ENCODE measurements at regions of chr3 and their contacts with region 1.

Region 1: DNA sequence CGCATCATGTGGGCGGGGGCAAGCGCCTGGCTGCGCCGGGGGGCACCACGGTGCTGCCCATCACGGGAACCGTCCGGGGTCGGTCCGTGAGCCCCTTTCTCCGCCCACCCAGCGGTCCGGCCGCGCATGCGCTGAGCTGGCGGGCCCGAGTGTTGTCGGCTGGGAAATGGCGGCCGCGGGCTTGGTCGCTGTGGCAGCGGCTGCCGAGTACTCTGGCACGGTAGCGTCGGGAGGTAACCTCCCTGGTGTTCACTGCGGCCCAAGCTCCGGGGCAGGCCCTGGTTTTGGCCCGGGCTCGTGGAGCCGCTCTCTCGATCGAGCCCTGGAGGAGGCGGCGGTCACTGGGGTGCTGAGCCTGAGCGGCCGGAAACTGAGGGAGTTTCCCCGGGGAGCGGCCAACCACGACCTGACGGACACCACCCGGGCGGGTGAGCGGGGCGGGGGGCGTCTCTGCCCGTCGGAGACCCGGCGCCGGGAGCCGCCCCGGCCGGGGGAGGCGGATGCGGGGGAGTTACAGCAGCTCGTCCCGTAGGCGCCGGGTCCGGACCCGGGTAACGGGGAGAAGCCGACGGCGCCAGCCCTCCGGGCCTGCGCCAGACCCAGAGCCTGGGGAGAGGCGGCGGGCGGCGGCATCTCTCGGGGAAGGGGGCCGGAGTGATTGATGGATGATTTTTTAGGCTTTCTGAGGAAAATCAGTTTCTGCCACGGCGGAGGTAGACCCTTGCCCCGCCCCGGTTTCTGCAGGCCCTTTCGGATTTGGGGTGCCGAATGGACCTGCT is at the start of gene LRCH3:
- DNase-seq: peak; percentile 91
- ATAC-seq: peak; percentile 75
- H3K4me3 ChIP-seq: peak within 1 kb of the TSS; percentile 73 to 98 (median 95)
- H3K4me3 Mint-ChIP-seq: peak within 1 kb of the TSS; percentile 96
- H3K27ac ChIP-seq: peak within 1 kb of the TSS; percentile 96 to 99
- H3K27ac Mint-ChIP-seq: peak within 1 kb of the TSS; percentile 97
- H3K4me1 ChIP-seq: peaks cover 33 to 36% of the 10 kb centered on the region in 2 donors
- H3K4me1 Mint-ChIP-seq: peaks cover 54% of the 10 kb centered on the region
- H3K27me3 ChIP-seq: no peaks in the 10 kb centered on the region
- H3K27me3 Mint-ChIP-seq: no peaks in the 10 kb centered on the region
- CTCF ChIP-seq: no peak
- total RNA-seq, gene LRCH3: 136 and 145 TPM in 2 replicates

Region 2: DNA sequence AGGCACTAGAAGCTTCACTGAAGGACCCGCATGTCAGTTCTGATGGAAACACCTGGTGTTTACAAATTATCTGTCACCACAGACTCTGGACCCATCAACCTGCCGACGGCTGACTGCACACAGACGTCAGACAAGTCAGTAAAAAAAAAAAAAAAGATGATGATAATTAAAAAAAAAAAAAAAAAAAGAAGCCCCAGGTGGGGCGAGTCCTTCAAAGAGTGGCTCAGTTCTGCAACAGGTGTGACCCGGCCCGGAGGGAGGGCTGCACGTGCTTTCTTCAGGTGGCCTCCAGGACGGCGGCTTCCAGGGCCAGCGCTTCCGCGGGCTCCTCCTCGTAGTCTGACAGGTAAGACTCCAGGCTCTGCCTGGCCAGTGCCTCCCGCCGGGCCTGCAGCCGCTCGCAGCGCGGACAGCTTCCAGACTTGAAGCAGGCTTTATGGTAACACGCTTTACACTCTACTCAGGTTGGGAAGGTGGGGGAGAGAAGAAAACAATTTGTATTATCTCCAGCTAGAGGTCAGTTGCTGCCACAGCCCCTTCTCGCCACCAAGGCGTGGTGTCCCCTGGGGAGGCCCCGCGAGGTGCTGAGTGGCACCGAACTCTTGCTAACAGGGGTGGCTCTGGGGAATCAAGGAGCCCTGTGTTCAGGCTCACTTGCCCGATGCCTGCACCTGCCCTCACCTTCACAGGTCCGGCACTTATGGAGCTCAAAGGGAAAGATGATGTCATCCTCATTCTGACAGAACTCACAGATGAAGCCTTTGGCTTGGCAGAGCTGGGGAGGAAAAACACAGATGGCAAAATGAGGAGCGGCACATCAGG is 116.3 kb before region 1 on chr3:
- CTCF ChIA-PET with region 1: no interaction called
- POLR2A ChIA-PET with region 1: interaction called, 7 read pairs
- intact Hi-C with region 1: loop called (anchors 5 kb)
- DNase-seq: peak; percentile 80
- ATAC-seq: peak; percentile 91
- H3K4me3 ChIP-seq: no peak overlapping the region
- H3K4me3 Mint-ChIP-seq: peak overlapping the region; percentile 89
- H3K27ac ChIP-seq: peak overlapping the region; percentile 73
- H3K27ac Mint-ChIP-seq: peak overlapping the region; percentile 96
- H3K4me1 ChIP-seq: peaks cover 3 to 21% of the 10 kb centered on the region in 2 donors
- H3K4me1 Mint-ChIP-seq: peaks cover 47% of the 10 kb centered on the region
- H3K27me3 ChIP-seq: no peaks in the 10 kb centered on the region
- H3K27me3 Mint-ChIP-seq: no peaks in the 10 kb centered on the region
- CTCF ChIP-seq: no peak

Region 3: DNA sequence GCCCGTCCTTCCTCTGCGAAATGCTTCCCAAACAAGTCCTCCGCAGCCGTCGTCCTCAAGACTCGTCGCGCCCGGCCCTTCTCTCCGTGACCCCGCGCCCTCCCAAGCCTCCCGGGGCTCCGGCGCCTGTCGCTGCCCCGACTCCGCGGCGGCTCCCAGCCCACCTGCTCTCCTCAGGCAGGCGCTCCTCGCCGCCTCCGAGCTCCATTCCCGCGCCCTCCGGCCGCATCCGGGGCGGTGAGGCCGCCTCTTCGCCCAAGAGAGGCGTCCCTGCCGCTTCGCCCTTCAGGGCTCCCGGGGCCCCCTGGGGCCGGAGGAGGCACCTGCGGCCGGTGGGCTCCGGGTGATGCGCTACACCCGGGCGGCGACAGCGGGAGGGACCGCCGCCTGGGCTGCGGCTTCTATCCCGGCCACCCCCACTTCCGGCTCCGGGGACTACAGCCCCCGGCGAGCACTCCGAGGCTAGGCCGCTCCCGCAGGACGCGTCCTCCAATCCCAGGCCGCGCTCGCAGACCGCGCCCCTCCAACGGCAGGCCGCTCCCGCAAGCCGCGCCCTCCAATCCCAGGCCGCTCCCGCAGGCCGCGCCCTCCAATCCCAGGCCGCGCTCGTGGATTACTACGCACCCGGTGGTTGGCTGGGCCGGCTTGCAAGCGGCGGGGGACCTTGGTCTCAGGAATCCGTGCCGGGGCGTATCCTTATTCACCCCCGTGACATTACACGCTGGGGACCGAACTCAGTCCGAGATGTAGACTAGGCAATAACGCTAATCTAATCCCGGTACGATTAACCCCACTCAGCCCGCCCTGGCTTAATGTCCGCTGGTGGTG is 54.6 kb before region 1 on chr3 and contains the start of gene RUBCN:
- CTCF ChIA-PET with region 1: no interaction called
- POLR2A ChIA-PET with region 1: interaction called, 3 read pairs
- intact Hi-C with region 1: loop called (anchors 1 kb)
- DNase-seq: peak; percentile 95
- ATAC-seq: peak; percentile 86
- H3K4me3 ChIP-seq: peak within 1 kb of the TSS; percentile 61 to 93 (median 87)
- H3K4me3 Mint-ChIP-seq: peak within 1 kb of the TSS; percentile 100
- H3K27ac ChIP-seq: peak within 1 kb of the TSS; percentile 89 to 95
- H3K27ac Mint-ChIP-seq: peak within 1 kb of the TSS; percentile 99
- H3K4me1 ChIP-seq: peaks cover 47 to 51% of the 10 kb centered on the region in 2 donors
- H3K4me1 Mint-ChIP-seq: peaks cover 50% of the 10 kb centered on the region
- H3K27me3 ChIP-seq: no peaks in the 10 kb centered on the region
- H3K27me3 Mint-ChIP-seq: no peaks in the 10 kb centered on the region
- CTCF ChIP-seq: no peak
- total RNA-seq, gene RUBCN: 423 and 427 TPM in 2 replicates

Region 4: DNA sequence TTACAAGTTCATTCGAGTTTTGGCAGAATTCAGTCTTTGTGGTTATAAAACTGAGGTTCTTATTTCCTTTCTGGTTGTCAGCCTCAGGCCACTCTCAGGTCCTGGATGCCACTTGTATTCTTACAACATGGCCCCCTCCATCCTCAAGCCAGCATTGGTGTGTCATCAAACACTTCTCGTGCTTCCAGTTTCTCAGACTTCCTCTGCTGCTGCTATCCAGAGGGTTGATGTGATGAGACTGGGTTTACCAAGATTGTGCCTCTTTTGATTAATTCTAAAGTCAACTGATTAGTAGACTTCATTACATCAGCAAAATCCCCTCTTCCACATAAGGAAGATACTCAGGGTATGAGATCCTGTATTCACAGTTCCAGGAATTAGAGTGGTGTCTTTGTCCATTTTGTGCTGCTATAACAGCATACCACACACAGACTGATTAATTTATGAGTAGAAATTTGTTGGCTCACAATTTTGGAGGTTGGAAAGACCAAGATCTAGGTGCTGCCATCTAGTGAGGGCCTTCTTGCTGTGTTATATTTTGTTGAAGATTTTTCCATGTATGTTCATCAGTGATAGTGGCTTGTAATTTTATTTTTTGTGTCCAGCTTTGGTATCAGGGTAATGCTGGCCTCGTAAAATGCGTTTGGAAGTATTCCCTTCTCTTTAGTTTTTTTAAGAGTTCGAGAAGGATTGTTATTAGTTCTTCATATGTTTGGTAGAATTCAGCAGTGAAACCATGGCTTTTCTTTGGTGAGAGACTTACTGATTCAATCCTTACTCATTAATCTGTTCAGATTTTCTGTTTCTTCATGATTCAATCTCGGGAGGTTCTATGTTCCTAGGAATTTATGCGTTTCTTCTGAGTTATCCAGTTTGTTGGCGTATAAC is 10.8 kb after region 1 on chr3:
- CTCF ChIA-PET with region 1: interaction called, 13 read pairs
- POLR2A ChIA-PET with region 1: interaction called, 7 read pairs
- intact Hi-C with region 1: loop called (anchors 1 kb)
- DNase-seq: peak; percentile 66
- ATAC-seq: peak; percentile 54
- H3K4me3 ChIP-seq: no peak overlapping the region
- H3K4me3 Mint-ChIP-seq: no peak overlapping the region
- H3K27ac ChIP-seq: peak overlapping the region in 1 of 2 donors; percentile 27
- H3K27ac Mint-ChIP-seq: peak overlapping the region; percentile 12
- H3K4me1 ChIP-seq: peaks cover 15 to 28% of the 10 kb centered on the region in 2 donors
- H3K4me1 Mint-ChIP-seq: peaks cover 51% of the 10 kb centered on the region
- H3K27me3 ChIP-seq: no peaks in the 10 kb centered on the region
- H3K27me3 Mint-ChIP-seq: no peaks in the 10 kb centered on the region
- CTCF ChIP-seq: peak; percentile 80

Region 5: DNA sequence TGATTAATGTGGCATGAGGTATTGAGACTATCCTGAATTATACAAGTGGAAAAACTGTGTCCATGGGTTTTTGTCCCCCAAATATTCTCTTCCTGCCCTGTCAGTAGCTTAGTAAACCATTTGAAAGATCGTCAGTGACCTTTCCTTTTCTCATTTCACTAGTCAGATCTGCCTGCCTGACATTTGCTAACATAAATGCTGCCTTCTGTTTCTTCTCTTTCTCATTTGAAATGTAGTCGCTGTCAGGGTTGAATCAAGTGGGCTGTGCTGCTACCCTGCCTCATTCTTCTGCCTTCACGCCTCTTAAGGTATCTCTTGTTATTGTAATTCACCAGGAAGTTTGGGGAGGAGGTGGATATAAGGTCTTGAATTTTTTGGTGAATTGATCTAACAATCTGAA is 67.3 kb after region 1 on chr3:
- CTCF ChIA-PET with region 1: no interaction called
- POLR2A ChIA-PET with region 1: no interaction called
- intact Hi-C with region 1: no loop called
- DNase-seq: no peak
- ATAC-seq: no peak
- H3K4me3 ChIP-seq: no peak overlapping the region
- H3K4me3 Mint-ChIP-seq: no peak overlapping the region
- H3K27ac ChIP-seq: no peak overlapping the region
- H3K27ac Mint-ChIP-seq: peak overlapping the region; percentile 17
- H3K4me1 ChIP-seq: no peaks in the 10 kb centered on the region
- H3K4me1 Mint-ChIP-seq: peaks cover 3% of the 10 kb centered on the region
- H3K27me3 ChIP-seq: no peaks in the 10 kb centered on the region
- H3K27me3 Mint-ChIP-seq: no peaks in the 10 kb centered on the region
- CTCF ChIP-seq: no peak

Region 6: GRCh38 chr3:197949754-197950660 is 158.7 kb after region 1 on chr3 and contains the start of gene RPL35A:
- CTCF ChIA-PET with region 1: no interaction called
- POLR2A ChIA-PET with region 1: no interaction called
- intact Hi-C with region 1: loop called (anchors 5 kb)
- DNase-seq: peak; percentile 98
- ATAC-seq: peak; percentile 92
- H3K4me3 ChIP-seq: peak within 1 kb of the TSS; percentile 65 to 89 (median 71)
- H3K4me3 Mint-ChIP-seq: peak within 1 kb of the TSS; percentile 97
- H3K27ac ChIP-seq: peak within 1 kb of the TSS; percentile 97 to 100
- H3K27ac Mint-ChIP-seq: peak within 1 kb of the TSS; percentile 99
- H3K4me1 ChIP-seq: peaks cover 19 to 34% of the 10 kb centered on the region in 2 donors
- H3K4me1 Mint-ChIP-seq: peaks cover 36% of the 10 kb centered on the region
- H3K27me3 ChIP-seq: no peaks in the 10 kb centered on the region
- H3K27me3 Mint-ChIP-seq: no peaks in the 10 kb centered on the region
- CTCF ChIP-seq: no peak
- total RNA-seq, gene RPL35A: 1,136 and 1,228 TPM in 2 replicates